Aorta (tissue), 5 donors: ENCODE measurements at regions of chr12 and their contacts with region 1.

Region 1: GRCh38 chr12:92649511-92650227 is 53.1 kb upstream of the PLEKHG7 start:
- DNase-seq: peak in 1 of 2 donors; percentile 54
- ATAC-seq: peak; percentile 77
- H3K4me3 ChIP-seq: no peak overlapping the region
- H3K27ac ChIP-seq: no peak overlapping the region
- H3K4me1 ChIP-seq: no peaks in the 10 kb centered on the region
- H3K27me3 ChIP-seq: no peaks in the 10 kb centered on the region

Region 2: DNA sequence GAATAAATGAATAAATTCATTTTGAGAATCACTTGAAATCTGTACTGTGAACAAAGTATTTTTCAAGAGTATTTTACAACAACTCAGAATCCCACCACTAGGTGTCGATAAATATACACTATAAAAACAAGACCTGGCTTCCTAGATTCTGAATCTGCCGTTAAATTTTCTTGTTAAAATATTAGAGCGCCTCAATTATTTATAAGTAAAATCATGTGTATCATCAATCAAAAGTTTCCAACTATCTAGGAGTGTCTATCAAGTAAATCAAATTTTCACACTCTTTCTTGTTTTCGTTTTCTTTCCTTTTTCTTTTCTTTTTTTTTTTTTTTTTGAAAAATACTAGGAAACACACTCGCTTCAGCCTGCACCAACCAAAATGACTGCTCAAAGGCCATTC is 1287.8 kb before region 1 on chr12:
- intact Hi-C with region 1: loop called (anchors 5 kb)
- DNase-seq: no peak
- ATAC-seq: no peak
- H3K4me3 ChIP-seq: no peak overlapping the region
- H3K27ac ChIP-seq: no peak overlapping the region
- H3K4me1 ChIP-seq: no peaks in the 10 kb centered on the region
- H3K27me3 ChIP-seq: no peaks in the 10 kb centered on the region

Region 3: DNA sequence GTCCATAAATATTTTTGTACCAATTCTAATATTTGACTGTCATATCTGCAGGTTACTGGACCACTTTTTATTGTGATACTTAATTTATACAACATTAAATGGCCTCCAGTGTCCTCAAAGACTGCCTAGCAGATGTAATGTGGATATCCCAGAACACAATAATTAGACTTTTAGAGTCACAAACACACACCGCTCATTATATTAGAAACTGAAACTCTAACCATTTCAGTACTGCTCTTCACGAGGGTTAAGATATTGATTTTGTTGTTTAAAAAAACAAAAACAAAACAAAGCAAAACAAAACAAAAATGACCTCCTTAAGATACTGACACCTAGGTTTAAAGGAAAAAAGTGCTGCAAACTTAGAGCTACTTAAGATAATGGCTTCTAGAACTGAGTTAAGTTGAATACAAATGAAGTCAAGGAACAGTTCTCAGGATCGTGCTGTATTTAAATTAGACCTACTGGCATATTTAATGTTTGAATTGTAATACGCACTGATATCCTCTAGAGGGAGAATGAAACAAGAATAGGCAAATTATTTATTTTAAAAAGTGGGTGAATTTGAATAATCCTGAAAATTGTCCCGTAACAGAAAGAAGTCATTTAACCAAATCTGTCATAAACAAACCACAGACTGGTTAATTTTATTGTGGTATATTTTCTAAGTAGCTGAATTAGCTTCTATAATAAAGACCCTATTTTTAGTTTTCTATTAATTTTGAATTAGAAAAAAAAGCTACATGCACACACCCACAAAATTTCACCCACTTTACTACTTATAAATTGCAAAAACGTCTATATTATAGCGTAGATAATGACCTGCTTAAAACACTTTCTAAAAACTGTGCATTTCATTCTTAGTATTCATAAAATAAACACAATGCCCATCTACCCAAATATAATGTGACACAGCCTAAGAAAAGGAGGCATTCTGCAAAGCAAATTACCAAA is 1071.8 kb before region 1 on chr12:
- intact Hi-C with region 1: loop called in 1 of 2 experiments (anchors 5 kb)
- DNase-seq: no peak
- ATAC-seq: no peak
- H3K4me3 ChIP-seq: no peak overlapping the region
- H3K27ac ChIP-seq: no peak overlapping the region
- H3K4me1 ChIP-seq: no peaks in the 10 kb centered on the region
- H3K27me3 ChIP-seq: no peaks in the 10 kb centered on the region

Region 4: GRCh38 chr12:92582475-92582874 is 67.2 kb before region 1 on chr12:
- intact Hi-C with region 1: no loop called
- DNase-seq: no peak
- ATAC-seq: no peak
- H3K4me3 ChIP-seq: no peak overlapping the region
- H3K27ac ChIP-seq: no peak overlapping the region
- H3K4me1 ChIP-seq: no peaks in the 10 kb centered on the region
- H3K27me3 ChIP-seq: no peaks in the 10 kb centered on the region